ENCODE measurements at regions of chr17 and their contacts with region 1.

Region 1: DNA sequence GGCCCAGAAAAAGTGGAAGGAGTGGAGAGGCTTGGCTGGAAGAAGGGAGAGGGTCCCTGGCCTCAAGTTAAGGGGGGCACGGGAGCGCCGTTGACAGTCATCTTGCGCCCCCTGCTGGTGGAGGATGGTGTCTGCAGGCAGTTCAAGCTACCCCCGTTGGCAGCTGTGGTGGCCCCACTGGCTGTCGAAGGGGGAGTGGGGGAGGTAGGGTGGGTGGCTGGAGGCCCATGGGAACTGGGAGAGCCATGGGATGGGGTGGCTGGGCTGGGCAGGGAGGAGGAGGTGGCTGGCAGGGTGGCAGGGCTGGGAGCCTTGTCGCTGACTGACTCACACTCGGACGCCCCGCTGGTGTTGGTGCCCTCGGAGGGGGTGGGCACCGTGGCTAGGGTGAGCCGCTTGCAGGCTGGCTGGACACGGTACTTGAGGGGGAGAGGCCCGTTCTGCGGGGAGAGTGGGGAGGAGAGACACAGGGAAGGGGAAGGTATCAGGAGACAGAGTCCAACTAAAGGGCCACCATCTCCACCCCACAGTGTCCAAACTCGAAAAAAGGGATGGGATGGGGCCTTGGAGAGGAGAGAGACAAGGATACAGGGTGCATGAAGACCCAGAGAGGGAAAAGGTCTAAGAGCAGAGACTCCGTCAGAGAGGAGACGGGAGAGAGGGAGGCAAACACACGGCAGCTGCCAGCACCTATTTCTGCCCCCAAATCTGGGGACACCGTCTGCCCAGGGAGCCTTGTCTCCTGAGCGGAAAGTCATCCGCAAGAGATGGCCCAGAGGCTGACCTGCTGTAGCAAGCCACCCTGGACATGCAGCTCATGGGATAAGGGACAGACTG is 5.2 kb downstream of the CISD3 start:
- DNase-seq: peak; percentile 63 to 83 (median 72)
- ATAC-seq: peak; percentile 46
- H3K4me3 ChIP-seq: no peak overlapping the region
- H3K4me3 Mint-ChIP-seq: no peak overlapping the region
- H3K27ac ChIP-seq: no peak overlapping the region
- H3K27ac Mint-ChIP-seq: no peak overlapping the region
- H3K4me1 ChIP-seq: peaks cover 45% of the 10 kb centered on the region
- H3K4me1 Mint-ChIP-seq: peaks cover 50% of the 10 kb centered on the region
- H3K27me3 ChIP-seq: no peaks in the 10 kb centered on the region
- H3K27me3 Mint-ChIP-seq: no peaks in the 10 kb centered on the region
- CTCF ChIP-seq: peak; percentile 93

Region 2: DNA sequence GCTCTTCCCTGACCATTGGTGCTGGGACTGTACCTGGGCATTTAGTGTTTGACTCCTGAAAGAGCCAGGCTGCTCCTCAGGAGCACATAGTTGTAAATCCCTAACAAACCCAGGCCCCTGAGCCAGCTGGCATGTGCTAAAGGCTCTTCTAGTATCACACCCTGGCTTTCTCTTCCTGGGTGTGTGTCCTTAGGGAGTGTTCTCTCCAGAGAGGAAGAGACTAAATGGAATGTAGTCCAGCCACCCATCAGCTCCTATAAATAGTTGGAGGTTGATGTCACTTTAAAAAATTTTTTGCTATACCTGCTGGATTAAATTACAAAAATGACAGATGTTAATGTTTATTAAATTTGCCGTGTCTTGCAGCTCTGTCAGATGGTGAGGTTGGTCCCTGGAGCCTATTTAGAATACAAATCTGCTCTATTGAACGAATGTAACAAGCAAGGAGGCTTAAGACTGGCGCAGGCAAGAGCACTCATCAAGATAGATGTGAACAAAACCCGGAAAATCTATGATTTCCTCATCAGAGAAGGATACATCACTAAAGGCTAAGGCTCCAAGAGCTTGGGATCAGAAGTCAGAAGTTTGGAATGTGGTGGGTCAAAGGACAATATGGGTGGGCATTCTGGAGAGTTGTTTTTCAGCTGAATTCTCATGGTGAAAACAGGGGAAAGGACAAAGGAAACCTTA is 1258.8 kb before region 1 on chr17:
- CTCF ChIA-PET with region 1: no interaction called
- POLR2A ChIA-PET with region 1: no interaction called
- intact Hi-C with region 1: no loop called
- DNase-seq: no peak
- ATAC-seq: no peak
- H3K4me3 ChIP-seq: no peak overlapping the region
- H3K4me3 Mint-ChIP-seq: no peak overlapping the region
- H3K27ac ChIP-seq: no peak overlapping the region
- H3K27ac Mint-ChIP-seq: no peak overlapping the region
- H3K4me1 ChIP-seq: no peaks in the 10 kb centered on the region
- H3K4me1 Mint-ChIP-seq: no peaks in the 10 kb centered on the region
- H3K27me3 ChIP-seq: no peaks in the 10 kb centered on the region
- H3K27me3 Mint-ChIP-seq: no peaks in the 10 kb centered on the region
- CTCF ChIP-seq: no peak

Region 3: DNA sequence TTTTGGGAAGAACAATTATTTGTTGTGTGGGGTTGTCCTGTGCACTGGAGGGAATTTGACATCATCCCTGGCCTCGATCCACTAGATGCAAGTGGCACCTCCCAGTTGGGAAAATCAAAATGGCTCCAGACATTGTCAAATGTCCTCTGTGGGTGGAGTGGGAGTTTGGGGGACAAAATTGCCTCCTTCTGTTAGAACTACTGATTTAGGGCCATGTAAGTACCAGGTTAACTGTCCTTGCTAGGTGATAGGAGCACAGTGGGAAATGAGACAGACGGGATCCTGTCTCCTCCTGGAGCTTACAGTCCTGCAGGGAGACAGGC is 250.3 kb before region 1 on chr17:
- CTCF ChIA-PET with region 1: no interaction called
- POLR2A ChIA-PET with region 1: no interaction called
- intact Hi-C with region 1: loop called in 1 of 2 experiments (anchors 5 kb)
- DNase-seq: no peak
- ATAC-seq: no peak
- H3K4me3 ChIP-seq: no peak overlapping the region
- H3K4me3 Mint-ChIP-seq: no peak overlapping the region
- H3K27ac ChIP-seq: no peak overlapping the region
- H3K27ac Mint-ChIP-seq: no peak overlapping the region
- H3K4me1 ChIP-seq: peaks cover 9% of the 10 kb centered on the region
- H3K4me1 Mint-ChIP-seq: peaks cover 9% of the 10 kb centered on the region
- H3K27me3 ChIP-seq: no peaks in the 10 kb centered on the region
- H3K27me3 Mint-ChIP-seq: no peaks in the 10 kb centered on the region
- CTCF ChIP-seq: no peak

Region 4: DNA sequence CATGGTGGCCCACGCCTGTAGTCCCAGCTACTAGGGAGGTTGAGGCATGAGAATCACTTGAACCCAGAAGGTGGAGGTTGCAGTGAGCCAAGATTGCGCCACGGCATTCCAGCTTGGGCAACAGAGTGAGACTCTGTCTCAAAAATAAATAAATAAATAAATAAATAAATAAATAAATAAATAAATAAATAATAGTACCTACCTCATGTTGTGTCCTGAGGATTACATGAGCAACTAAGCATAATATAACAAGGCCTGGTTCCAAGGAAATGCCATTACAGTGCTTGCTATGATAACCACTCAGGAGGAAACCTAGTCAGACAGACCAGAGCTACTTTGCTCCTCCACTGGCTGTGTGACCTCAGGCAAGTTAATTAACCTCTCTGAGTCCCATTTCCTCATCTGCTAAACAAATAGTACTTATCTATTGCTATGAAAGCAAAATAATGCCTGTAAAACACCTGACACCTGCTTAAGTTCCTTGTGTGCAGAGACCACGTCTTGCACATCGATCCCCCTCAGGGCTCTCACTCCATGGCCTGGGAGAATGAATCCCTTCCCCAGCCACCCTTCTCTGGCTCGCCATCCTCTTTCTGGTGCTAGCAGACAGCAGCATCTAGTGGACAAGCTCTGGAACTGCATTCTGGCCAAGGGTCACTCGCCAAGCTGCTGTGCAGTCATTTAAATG is 68.1 kb before region 1 on chr17:
- CTCF ChIA-PET with region 1: interaction called, 16 read pairs
- POLR2A ChIA-PET with region 1: no interaction called
- intact Hi-C with region 1: no loop called
- DNase-seq: peak; percentile 18 to 74 (median 33)
- ATAC-seq: peak; percentile 60
- H3K4me3 ChIP-seq: no peak overlapping the region
- H3K4me3 Mint-ChIP-seq: no peak overlapping the region
- H3K27ac ChIP-seq: no peak overlapping the region
- H3K27ac Mint-ChIP-seq: no peak overlapping the region
- H3K4me1 ChIP-seq: no peaks in the 10 kb centered on the region
- H3K4me1 Mint-ChIP-seq: peaks cover 5% of the 10 kb centered on the region
- H3K27me3 ChIP-seq: peaks cover 36 to 42% of the 10 kb centered on the region in 2 experiments
- H3K27me3 Mint-ChIP-seq: peaks cover 73% of the 10 kb centered on the region
- CTCF ChIP-seq: peak; percentile 98

Region 5: DNA sequence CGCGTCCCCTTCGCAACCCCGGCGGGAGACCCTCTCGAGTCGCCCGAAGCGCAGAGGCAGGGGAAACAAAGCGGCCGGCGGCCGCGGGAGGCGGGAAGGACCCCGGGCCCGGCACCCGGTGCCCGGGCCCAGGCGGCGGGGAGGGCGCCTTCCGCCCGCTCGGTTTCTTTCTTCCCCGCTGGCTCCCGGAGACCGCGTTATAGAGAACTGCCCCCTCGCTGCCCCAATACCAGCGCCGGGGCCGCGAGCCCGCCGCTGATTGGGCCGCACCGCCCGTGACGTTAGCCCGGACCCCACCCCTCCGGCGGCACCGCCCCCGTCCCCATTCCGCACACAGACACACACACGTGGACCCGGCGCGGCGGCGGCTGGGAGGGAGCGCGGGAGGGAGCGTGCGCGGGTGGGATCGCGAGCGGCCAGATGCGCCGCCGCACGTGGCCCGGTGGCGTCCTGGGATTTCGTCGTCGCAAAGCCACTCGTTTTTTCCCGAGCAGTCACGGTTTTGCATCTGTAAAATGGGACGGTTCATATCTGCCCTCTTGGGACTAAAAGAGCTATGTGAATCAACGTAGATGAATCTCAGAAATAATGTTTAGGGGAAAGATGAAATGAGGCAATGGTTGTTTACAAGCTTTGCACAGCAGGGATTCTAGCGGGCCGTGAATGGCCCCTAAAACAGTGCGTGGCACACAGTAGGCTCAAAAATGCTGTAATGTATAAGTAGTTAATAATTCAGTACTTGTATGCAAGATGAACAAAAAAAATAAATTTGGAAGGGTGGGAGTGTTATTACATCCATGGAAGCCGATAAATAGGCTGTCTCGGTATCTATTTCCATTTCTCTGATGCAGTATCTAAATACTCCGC is 60.4 kb before region 1 on chr17 and contains the start of gene EPOP:
- CTCF ChIA-PET with region 1: interaction called, 70 read pairs
- POLR2A ChIA-PET with region 1: interaction called, 18 read pairs
- intact Hi-C with region 1: loop called (anchors 1 kb)
- DNase-seq: peak; percentile 47 to 92 (median 80)
- ATAC-seq: peak; percentile 80
- H3K4me3 ChIP-seq: peak within 1 kb of the TSS; percentile 38
- H3K4me3 Mint-ChIP-seq: peak within 1 kb of the TSS; percentile 75
- H3K27ac ChIP-seq: no peak within 1 kb of the TSS
- H3K27ac Mint-ChIP-seq: no peak within 1 kb of the TSS
- H3K4me1 ChIP-seq: peaks cover 37% of the 10 kb centered on the region
- H3K4me1 Mint-ChIP-seq: peaks cover 24% of the 10 kb centered on the region
- H3K27me3 ChIP-seq: peaks cover 26 to 34% of the 10 kb centered on the region in 2 experiments
- H3K27me3 Mint-ChIP-seq: peaks cover 54% of the 10 kb centered on the region
- CTCF ChIP-seq: no peak
- total RNA-seq, gene EPOP: 0.16 to 0.34 TPM

Region 6: DNA sequence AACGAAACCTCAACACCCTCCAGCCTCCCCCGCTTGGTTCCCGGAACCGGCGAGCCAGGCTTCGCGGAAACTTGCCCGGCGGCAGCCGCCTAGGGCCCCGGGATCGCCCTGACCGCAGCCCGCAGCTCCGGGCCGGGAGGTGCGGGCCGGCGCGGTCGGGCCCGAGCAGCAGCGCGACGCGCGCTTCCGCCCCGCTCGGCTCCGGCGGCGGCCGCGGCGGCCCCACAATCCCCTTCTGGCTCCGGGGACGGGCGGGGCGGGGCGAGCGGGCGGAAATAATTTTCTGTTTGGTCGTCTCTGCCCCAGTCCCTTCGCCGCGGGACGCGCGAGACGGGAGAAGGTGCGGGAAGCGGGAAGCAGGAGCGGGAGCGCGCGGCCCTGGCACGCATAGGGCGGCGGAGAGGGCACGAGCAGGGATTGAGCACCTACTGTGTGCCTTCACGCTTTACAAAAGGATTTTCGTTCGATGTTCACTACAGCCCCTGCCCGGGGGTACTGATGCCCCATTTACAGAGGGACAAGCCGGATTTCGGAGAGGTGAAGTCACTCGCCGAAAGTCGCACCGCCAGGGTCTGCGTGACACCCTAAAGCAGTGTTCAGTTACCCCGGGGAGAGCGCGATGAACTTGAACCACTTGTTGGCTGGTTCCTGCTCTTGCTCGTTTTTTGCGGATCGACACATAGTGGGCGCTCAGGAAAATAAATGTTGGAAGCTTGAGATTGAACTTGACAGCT is 33.0 kb before region 1 on chr17:
- CTCF ChIA-PET with region 1: interaction called, 11 read pairs
- POLR2A ChIA-PET with region 1: interaction called, 29 read pairs
- intact Hi-C with region 1: loop called in 1 of 2 experiments (anchors 5 kb)
- DNase-seq: peak; percentile 62 to 92 (median 76)
- ATAC-seq: peak; percentile 33
- H3K4me3 ChIP-seq: peak overlapping the region; percentile 73
- H3K4me3 Mint-ChIP-seq: peak overlapping the region; percentile 95
- H3K27ac ChIP-seq: peak overlapping the region; percentile 94 to 97
- H3K27ac Mint-ChIP-seq: peak overlapping the region; percentile 88
- H3K4me1 ChIP-seq: peaks cover 61% of the 10 kb centered on the region
- H3K4me1 Mint-ChIP-seq: peaks cover 50% of the 10 kb centered on the region
- H3K27me3 ChIP-seq: no peaks in the 10 kb centered on the region
- H3K27me3 Mint-ChIP-seq: no peaks in the 10 kb centered on the region
- CTCF ChIP-seq: no peak

Region 7: DNA sequence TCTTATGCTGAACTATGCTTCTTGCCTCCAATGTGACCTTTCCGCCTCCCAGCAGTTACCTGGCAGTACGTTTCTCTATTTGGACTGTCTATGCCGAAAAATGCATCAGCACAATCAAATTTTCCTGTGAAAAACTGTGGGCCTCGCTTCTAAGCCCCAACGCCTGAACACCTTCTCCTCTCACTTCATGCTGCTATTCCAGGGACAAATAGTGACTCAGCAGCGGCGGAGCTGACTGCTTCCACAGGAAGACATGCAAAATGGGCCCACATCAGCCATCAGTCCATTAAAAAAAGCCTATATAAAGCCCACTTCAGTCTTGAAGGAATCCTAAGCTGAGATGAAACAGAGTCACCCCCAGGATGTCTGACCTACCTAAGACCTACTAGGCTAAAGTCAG is 74.4 kb after region 1 on chr17:
- CTCF ChIA-PET with region 1: no interaction called
- POLR2A ChIA-PET with region 1: no interaction called
- intact Hi-C with region 1: no loop called
- DNase-seq: no peak
- ATAC-seq: no peak
- H3K4me3 ChIP-seq: no peak overlapping the region
- H3K4me3 Mint-ChIP-seq: no peak overlapping the region
- H3K27ac ChIP-seq: no peak overlapping the region
- H3K27ac Mint-ChIP-seq: no peak overlapping the region
- H3K4me1 ChIP-seq: no peaks in the 10 kb centered on the region
- H3K4me1 Mint-ChIP-seq: no peaks in the 10 kb centered on the region
- H3K27me3 ChIP-seq: no peaks in the 10 kb centered on the region
- H3K27me3 Mint-ChIP-seq: no peaks in the 10 kb centered on the region
- CTCF ChIP-seq: no peak

Region 8: DNA sequence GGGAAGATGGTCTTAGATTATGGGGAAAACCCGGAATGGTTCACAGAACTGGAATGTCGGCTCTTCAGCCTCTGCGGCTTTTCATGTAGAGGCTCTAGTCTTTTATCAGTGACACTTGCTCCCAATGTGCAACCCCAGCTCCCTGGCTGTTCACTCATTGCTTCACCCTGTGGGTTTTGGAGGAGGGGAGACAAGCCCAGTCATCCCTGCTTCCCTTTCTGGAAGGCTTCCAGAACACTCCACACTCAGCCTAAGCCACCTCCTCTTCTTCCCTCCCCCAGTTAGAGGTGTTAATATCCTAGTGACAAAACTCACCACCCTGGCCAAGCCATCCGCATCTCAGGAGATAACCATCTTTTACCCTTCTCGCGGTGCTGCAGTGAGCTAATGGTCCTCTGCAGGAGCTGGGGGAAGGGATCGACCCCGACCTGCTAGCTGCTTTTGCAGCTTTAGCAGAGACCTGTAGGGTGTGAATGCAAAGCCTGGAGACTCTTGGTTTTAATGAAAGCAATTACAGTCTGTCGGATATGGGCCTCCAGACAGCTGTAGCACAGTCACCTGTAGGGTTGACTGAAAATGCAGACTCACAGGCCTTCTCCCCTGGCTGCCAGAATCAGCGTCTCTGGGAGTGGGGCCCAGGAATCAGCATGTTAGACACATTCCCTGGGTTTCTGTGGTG is 165.7 kb after region 1 on chr17:
- CTCF ChIA-PET with region 1: no interaction called
- POLR2A ChIA-PET with region 1: no interaction called
- intact Hi-C with region 1: no loop called
- DNase-seq: peak in 3 of 14 experiments; percentile 51 to 64 (median 63)
- ATAC-seq: no peak
- H3K4me3 ChIP-seq: no peak overlapping the region
- H3K4me3 Mint-ChIP-seq: peak overlapping the region; percentile 45
- H3K27ac ChIP-seq: peak overlapping the region; percentile 2 to 52
- H3K27ac Mint-ChIP-seq: peak overlapping the region; percentile 80
- H3K4me1 ChIP-seq: peaks cover 79% of the 10 kb centered on the region
- H3K4me1 Mint-ChIP-seq: peaks cover 63% of the 10 kb centered on the region
- H3K27me3 ChIP-seq: no peaks in the 10 kb centered on the region
- H3K27me3 Mint-ChIP-seq: no peaks in the 10 kb centered on the region
- CTCF ChIP-seq: no peak

Measured in CD4-positive, alpha-beta T cell (primary cell).